Panc1 (cell line): ENCODE measurements at regions of chr1 and their contacts with region 1.

Region 1: DNA sequence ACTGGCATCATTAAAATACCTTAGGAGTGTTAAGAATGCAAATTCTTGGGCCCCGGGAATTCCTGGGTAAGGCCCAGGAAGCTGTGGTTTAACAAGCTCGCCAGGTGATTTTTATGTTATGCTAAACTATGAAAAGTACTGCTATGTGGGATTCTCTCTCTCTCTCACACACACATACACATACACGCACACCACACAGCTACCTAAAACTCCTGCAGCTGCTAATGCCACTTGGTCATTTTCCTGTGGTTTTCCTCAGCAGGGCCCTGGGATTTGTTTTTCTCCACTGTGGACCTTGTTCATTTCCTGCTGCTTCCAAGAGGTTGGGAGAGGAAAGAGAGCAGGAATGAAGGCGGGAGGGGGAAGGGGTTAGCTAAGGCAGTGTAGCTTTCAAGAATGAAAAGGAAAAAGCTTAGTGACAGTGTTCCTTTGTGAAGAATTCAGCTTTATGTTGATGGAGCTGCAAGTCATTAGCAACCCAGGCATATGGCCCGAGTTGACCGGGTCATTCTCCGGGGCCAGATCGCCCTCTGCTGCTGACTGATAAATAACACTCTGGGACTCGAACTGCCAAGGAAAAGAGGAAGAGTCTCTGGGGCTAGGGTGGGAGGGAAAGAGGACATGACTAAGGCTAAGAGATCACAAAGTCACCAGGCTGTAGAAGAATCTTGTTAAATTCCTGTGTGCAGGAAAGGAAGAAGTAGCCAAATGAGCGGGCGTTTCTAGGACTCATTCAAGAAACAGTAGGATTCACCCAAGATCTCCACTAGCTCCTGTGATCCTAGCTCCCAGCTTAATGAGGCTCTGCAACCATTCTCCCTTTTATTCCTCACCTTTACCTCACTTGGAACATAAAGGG is 30.5 kb upstream of the LRIG2 start:
- DNase-seq: peak; percentile 28
- ATAC-seq: peak; percentile 98
- H3K4me3 ChIP-seq: no peak overlapping the region
- H3K27ac ChIP-seq: no peak overlapping the region
- H3K4me1 ChIP-seq: no peaks in the 10 kb centered on the region
- H3K27me3 ChIP-seq: no peaks in the 10 kb centered on the region
- CTCF ChIP-seq: peak; percentile 77

Region 2: GRCh38 chr1:111656086-111657017 is 1386.2 kb before region 1 on chr1:
- CTCF ChIA-PET with region 1: interaction called, 13 read pairs
- POLR2A ChIA-PET with region 1: no interaction called
- in situ Hi-C with region 1: no loop called
- intact Hi-C with region 1: no loop called
- DNase-seq: peak; percentile 35
- ATAC-seq: no peak; the same call in 1 of the 2 replicates
- H3K4me3 ChIP-seq: no peak overlapping the region
- H3K27ac ChIP-seq: no peak overlapping the region
- H3K4me1 ChIP-seq: no peaks in the 10 kb centered on the region
- H3K27me3 ChIP-seq: no peaks in the 10 kb centered on the region
- CTCF ChIP-seq: peak; percentile 57; the same call in 1 of the 2 replicates

Region 3: GRCh38 chr1:112715264-112716053 is 327.1 kb before region 1 on chr1 and contains the start of gene PPM1J:
- CTCF ChIA-PET with region 1: interaction called, 3 read pairs
- POLR2A ChIA-PET with region 1: no interaction called
- in situ Hi-C with region 1: no loop called
- intact Hi-C with region 1: loop called (anchors 5 kb)
- DNase-seq: no peak
- ATAC-seq: peak; percentile 82
- H3K4me3 ChIP-seq: peak within 1 kb of the TSS; percentile 53 to 64
- H3K27ac ChIP-seq: no peak within 1 kb of the TSS
- H3K4me1 ChIP-seq: no peaks in the 10 kb centered on the region; the same call in 1 of the 2 replicates
- H3K27me3 ChIP-seq: no peaks in the 10 kb centered on the region
- CTCF ChIP-seq: no peak
- total RNA-seq, gene PPM1J: 0.51 TPM

Region 4: DNA sequence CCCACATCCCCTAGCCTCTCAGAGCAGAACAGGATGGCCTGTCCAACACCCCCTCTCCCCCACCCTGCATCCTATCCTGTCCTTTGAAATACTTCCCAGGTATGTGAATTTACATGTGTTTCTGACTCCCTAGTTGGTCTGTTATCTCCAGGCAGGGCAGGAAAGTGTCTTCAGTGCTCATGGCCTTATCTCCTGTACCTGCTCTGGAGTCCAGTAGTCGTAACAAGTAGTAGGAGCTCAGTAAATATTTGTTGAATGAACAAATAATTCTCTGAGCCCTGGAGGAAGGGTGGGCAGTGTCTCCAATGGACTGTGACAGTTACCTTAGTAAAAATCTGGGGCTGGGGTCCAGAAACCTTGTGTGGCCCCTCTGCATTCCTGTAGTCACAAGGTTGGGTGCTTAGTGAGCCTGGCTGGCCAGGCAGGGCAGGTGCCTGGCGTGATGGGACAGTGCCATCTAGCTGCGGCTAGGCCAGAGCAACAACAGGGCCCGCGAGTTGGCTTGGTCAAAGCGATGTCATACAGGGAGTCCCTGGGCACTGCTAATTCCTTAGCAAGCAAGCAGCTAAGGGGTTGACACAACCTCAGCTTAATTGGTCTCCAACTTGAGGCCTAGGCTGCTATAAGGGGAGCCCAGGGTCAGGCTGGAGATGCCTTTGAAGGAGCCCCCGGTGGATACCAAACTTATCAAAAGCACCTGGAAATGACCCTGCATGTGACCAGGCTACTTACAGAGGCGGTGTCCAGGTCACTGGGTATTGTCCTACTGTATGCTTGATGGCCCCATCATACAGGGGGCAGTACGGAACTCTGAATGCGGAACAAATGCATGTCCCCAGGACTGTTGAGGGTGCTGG is 238.4 kb before region 1 on chr1:
- CTCF ChIA-PET with region 1: interaction called, 4 read pairs
- POLR2A ChIA-PET with region 1: no interaction called
- in situ Hi-C with region 1: no loop called
- intact Hi-C with region 1: loop called (anchors 10 kb)
- DNase-seq: peak; percentile 43
- ATAC-seq: peak; percentile 99
- H3K4me3 ChIP-seq: no peak overlapping the region
- H3K27ac ChIP-seq: no peak overlapping the region
- H3K4me1 ChIP-seq: no peaks in the 10 kb centered on the region
- H3K27me3 ChIP-seq: no peaks in the 10 kb centered on the region
- CTCF ChIP-seq: peak; percentile 89

Region 5: GRCh38 chr1:112882271-112882744 is 160.2 kb before region 1 on chr1:
- CTCF ChIA-PET with region 1: interaction called, 5 read pairs
- POLR2A ChIA-PET with region 1: no interaction called
- in situ Hi-C with region 1: no loop called
- intact Hi-C with region 1: loop called (anchors 1 kb)
- DNase-seq: no peak
- ATAC-seq: no peak
- H3K4me3 ChIP-seq: no peak overlapping the region
- H3K27ac ChIP-seq: no peak overlapping the region
- H3K4me1 ChIP-seq: no peaks in the 10 kb centered on the region
- H3K27me3 ChIP-seq: no peaks in the 10 kb centered on the region
- CTCF ChIP-seq: no peak

Region 6: DNA sequence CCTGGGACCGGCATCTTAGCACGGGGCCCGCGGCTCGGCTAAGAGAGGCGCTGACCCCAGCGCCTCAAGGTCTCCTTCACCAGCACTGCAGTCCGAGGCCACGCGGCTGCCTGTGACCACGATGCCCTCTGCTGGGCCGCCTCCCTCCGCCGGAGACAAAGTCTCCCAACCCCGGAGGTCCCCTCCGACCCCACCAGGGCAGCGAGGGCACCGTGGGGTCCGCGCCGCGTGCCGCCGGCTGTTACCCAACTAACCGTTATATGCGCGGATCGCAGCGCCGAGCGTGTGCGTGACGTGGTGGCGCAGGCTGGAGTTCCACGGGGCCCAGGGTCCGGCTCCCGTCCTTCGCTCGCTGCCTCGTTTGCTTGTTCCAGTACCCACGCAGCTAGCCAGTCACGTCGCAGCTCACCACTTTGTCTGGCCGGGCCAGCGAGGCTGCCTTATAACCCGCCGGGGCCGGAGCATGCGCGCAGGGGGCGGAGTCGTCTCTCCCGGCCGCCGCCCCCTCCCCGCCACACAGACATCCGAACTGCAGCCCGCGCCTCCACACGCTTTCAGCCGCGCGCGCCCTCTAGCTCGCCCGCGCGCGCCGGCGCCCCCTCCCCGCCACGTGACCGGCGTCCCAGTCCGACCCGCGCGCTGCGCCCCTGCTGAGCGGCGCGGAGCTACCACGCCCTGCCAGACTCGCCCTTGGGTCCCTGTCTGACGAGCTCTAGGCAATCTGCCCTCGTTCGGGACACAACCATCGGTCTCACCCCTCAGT is 86.6 kb before region 1 on chr1 and contains the start of gene SLC16A1:
- CTCF ChIA-PET with region 1: no interaction called
- POLR2A ChIA-PET with region 1: no interaction called
- in situ Hi-C with region 1: no loop called
- intact Hi-C with region 1: loop called (anchors 10 kb)
- DNase-seq: peak; percentile 54
- ATAC-seq: peak; percentile 92
- H3K4me3 ChIP-seq: peak within 1 kb of the TSS; percentile 81 to 87
- H3K27ac ChIP-seq: peak within 1 kb of the TSS; percentile 89
- H3K4me1 ChIP-seq: peaks cover 5% of the 10 kb centered on the region
- H3K27me3 ChIP-seq: no peaks in the 10 kb centered on the region
- CTCF ChIP-seq: peak; percentile 56
- total RNA-seq, gene SLC16A1: 51.5 TPM

Region 7: DNA sequence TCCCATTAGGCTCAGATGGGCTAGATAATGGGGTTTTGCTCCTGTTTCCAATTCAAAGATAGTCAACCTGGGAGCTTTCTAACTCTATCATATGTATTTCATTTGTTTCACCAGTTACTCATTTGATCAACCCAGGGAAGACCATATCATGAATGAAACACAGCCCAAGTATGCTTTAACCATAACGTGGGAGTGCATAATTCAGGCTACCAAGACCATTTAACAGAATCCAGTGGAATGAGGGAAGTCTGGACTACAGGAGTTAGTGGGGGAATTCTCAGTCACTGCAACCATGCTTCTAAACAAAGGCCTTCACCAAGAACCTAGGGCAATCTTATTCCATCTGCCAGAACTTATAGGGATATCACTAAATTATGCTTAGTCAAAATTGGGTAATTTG is 71.5 kb before region 1 on chr1:
- CTCF ChIA-PET with region 1: interaction called, 10 read pairs
- POLR2A ChIA-PET with region 1: interaction called, 3 read pairs
- in situ Hi-C with region 1: no loop called
- intact Hi-C with region 1: no loop called
- DNase-seq: no peak
- ATAC-seq: no peak
- H3K4me3 ChIP-seq: no peak overlapping the region
- H3K27ac ChIP-seq: no peak overlapping the region
- H3K4me1 ChIP-seq: no peaks in the 10 kb centered on the region
- H3K27me3 ChIP-seq: no peaks in the 10 kb centered on the region
- CTCF ChIP-seq: no peak